PC-9 (cell line): ENCODE measurements at regions of chr18 and their contacts with region 1.

Region 1: DNA sequence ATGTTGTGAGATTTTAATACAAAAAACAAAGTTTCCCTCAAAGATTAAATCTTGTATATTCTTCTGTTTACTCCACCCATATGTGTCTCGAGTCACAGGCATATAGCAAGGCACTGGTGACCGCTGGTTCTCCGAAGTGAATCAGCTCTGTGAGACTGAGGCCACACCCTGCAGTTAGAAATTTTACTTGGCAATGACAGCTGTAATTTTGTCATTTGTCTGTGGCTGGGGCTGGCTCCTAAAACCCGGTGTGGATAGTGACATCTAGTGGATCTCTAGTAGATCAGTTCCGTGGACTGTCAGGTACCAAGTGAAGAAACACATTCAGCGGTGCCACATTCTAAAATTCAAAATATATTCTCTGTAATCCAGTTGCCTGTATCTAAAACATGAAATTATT is 278.0 kb downstream of the NEDD4L start:
- DNase-seq: peak; percentile 61 to 86
- H3K4me3 ChIP-seq: no peak overlapping the region
- H3K27ac ChIP-seq: peak overlapping the region; percentile 58
- H3K4me1 ChIP-seq: peaks cover 12% of the 10 kb centered on the region
- H3K27me3 ChIP-seq: no peaks in the 10 kb centered on the region
- CTCF ChIP-seq: peak; percentile 68

Region 2: DNA sequence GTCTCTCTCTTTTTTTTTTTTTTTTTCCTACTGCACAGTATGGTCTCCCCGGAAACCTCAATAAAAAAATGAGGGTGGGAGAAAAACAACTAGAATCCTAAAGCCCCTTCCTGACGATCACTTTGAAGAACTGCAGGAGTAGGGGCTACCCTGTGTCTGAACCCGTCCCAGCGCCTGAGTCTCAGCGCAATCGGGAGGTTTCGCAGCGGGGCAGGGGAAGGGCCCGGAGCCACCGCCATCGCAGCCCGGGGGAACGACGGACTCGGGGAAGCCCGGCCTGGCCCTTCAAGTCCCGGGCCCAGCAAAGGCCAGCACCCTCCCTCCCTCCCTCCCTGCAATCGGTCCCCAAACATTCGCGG is 700.8 kb before region 1 on chr18:
- CTCF ChIA-PET with region 1: no interaction called
- POLR2A ChIA-PET with region 1: no interaction called
- intact Hi-C with region 1: loop called (anchors 10 kb)
- DNase-seq: no peak
- H3K4me3 ChIP-seq: peak overlapping the region; percentile 95
- H3K27ac ChIP-seq: peak overlapping the region; percentile 75
- H3K4me1 ChIP-seq: peaks cover 14% of the 10 kb centered on the region
- H3K27me3 ChIP-seq: no peaks in the 10 kb centered on the region
- CTCF ChIP-seq: no peak

Region 3: DNA sequence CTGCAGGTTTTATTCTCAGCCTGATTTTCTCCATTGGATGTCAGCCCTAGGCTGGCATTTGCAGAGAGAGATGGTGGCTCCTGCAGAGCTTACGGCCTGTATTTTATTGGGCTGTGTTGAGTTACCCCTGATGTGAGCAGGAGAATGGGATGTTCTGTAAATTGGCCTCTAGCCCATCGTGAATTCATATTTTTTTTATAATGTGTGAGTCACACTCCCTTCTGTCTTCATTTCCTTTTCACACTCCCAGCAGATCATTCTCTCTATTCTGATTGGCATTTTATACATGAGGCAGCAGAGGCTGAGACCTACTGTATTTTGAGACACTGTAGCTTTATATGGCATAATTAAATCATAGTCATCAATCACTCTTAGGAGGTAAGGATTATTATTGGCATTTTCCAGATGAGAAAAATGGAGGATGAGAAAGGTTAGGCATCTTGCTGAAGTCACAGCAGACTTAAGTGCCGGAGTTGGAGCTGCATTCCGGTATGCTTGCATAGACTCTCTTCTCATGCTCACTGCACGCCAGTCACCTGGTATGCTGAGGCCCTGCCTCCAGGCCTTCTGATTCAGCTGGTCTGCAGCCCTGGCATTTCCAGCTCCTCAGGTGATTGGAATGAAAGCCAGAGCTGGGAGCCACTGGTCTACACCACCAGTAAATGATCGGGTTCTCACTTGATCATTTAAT is 135.6 kb before region 1 on chr18:
- CTCF ChIA-PET with region 1: no interaction called
- POLR2A ChIA-PET with region 1: no interaction called
- intact Hi-C with region 1: loop called (anchors 2 kb)
- DNase-seq: peak; percentile 73 to 96
- H3K4me3 ChIP-seq: peak overlapping the region; percentile 32; the same call in 1 of the 2 replicates
- H3K27ac ChIP-seq: peak overlapping the region; percentile 92
- H3K4me1 ChIP-seq: peaks cover 85% of the 10 kb centered on the region
- H3K27me3 ChIP-seq: no peaks in the 10 kb centered on the region
- CTCF ChIP-seq: no peak